Activated B cell treated with CpG ODN at 0.5 μM for 24 hours (primary cell): ENCODE measurements at regions of chr14 and their contacts with region 1.

Region 1: DNA sequence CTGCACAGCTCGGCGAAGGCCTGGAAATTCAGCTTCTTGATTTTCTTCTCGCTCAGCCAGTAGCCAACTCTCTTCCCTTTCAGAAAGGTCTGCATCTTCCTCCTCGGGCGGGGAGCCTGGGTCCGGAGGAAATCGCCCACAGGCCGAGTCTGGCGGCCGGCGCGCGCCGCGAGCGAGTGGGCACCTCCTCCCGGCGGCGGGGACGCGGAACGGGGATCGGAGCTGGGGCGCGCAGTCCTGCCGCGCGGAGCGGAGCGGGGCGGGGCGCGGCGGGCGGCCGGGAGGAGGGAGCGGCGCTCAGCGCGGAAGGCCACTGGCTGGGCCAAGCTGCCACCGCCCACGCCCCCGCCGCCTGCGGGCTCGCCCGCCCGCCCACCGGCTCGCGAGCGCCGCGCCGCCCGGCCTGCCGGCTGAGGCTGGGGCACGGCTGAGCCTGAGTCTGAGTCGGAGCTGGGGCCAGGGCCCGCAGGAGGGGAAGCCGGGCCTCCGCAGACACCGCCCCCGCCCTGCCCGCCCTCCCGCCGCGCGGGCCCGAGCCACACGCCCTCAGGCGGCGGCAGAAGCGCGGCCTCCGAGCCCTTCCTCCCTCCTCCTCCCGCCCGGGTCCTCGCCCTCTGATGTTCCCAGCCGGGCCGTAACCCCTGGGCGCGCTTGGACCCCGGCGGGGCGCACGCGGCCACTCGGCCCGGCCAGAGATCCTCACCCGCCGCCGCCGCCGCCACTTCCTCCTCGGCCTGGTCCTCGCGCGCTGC is 480 bp downstream of the ITPK1 start:
- DNase-seq: peak; percentile 87
- ATAC-seq: peak; percentile 77
- H3K4me3 Mint-ChIP-seq: peak overlapping the region; percentile 91
- H3K27ac Mint-ChIP-seq: peak overlapping the region; percentile 73
- H3K4me1 Mint-ChIP-seq: peaks cover 30% of the 10 kb centered on the region
- H3K27me3 Mint-ChIP-seq: no peaks in the 10 kb centered on the region
- CTCF ChIP-seq: no peak

Region 2: GRCh38 chr14:92846162-92846897 is 268.9 kb before region 1 on chr14:
- CTCF ChIA-PET with region 1: no interaction called
- POLR2A ChIA-PET with region 1: no interaction called
- intact Hi-C with region 1: loop called (anchors 2 kb)
- DNase-seq: no peak
- ATAC-seq: peak; percentile 51
- H3K4me3 Mint-ChIP-seq: peak overlapping the region; percentile 3
- H3K27ac Mint-ChIP-seq: peak overlapping the region; percentile 46
- H3K4me1 Mint-ChIP-seq: peaks cover 40% of the 10 kb centered on the region
- H3K27me3 Mint-ChIP-seq: no peaks in the 10 kb centered on the region
- CTCF ChIP-seq: no peak

Region 3: GRCh38 chr14:93064411-93065323 is 50.6 kb before region 1 on chr14:
- CTCF ChIA-PET with region 1: interaction called, 3 read pairs
- POLR2A ChIA-PET with region 1: interaction called, 4 read pairs
- intact Hi-C with region 1: loop called (anchors 5 kb)
- DNase-seq: no peak
- ATAC-seq: no peak
- H3K4me3 Mint-ChIP-seq: no peak overlapping the region
- H3K27ac Mint-ChIP-seq: peak overlapping the region; percentile 61
- H3K4me1 Mint-ChIP-seq: peaks cover 69% of the 10 kb centered on the region
- H3K27me3 Mint-ChIP-seq: no peaks in the 10 kb centered on the region
- CTCF ChIP-seq: no peak

Region 4: DNA sequence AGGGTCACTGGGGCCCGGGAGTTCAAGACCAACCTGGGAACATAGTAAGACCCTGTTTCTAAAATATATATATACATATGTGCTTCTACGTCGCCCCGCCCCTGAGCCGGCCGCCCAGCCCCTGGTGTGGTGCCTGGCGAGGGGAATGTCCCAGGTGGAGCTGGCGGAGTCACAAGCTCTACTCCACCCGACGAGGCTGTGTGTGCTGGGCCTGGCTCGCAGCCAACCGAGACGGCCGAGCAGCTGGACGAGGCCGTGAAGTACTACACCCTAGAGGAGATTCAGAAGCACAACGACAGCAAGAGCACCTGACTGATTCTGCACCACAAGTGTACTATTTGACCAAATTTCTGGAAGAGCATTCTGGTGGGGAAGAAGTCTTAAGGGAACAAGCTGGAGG is 22.6 kb after region 1 on chr14:
- CTCF ChIA-PET with region 1: interaction called, 37 read pairs
- POLR2A ChIA-PET with region 1: no interaction called
- intact Hi-C with region 1: loop called (anchors 1 kb)
- DNase-seq: no peak
- ATAC-seq: no peak
- H3K4me3 Mint-ChIP-seq: no peak overlapping the region
- H3K27ac Mint-ChIP-seq: no peak overlapping the region
- H3K4me1 Mint-ChIP-seq: peaks cover 3% of the 10 kb centered on the region
- H3K27me3 Mint-ChIP-seq: no peaks in the 10 kb centered on the region
- CTCF ChIP-seq: no peak

Region 5: GRCh38 chr14:93219103-93219726 is 104.0 kb after region 1 on chr14:
- CTCF ChIA-PET with region 1: interaction called, 20 read pairs
- POLR2A ChIA-PET with region 1: interaction called, 3 read pairs
- intact Hi-C with region 1: loop called (anchors 1 kb)
- DNase-seq: no peak
- ATAC-seq: peak; percentile 67
- H3K4me3 Mint-ChIP-seq: no peak overlapping the region
- H3K27ac Mint-ChIP-seq: no peak overlapping the region
- H3K4me1 Mint-ChIP-seq: no peaks in the 10 kb centered on the region
- H3K27me3 Mint-ChIP-seq: no peaks in the 10 kb centered on the region
- CTCF ChIP-seq: no peak

Region 6: GRCh38 chr14:93543766-93544165 is 428.5 kb after region 1 on chr14:
- CTCF ChIA-PET with region 1: interaction called, 4 read pairs
- POLR2A ChIA-PET with region 1: no interaction called
- intact Hi-C with region 1: loop called (anchors 2 kb)
- DNase-seq: no peak
- ATAC-seq: no peak
- H3K4me3 Mint-ChIP-seq: no peak overlapping the region
- H3K27ac Mint-ChIP-seq: no peak overlapping the region
- H3K4me1 Mint-ChIP-seq: peaks cover 9% of the 10 kb centered on the region
- H3K27me3 Mint-ChIP-seq: peaks cover 6% of the 10 kb centered on the region
- CTCF ChIP-seq: no peak